ENCODE measurements at regions of chrX and their contacts with region 1.

Region 1: GRCh38 chrX:7286168-7286837 is 138.3 kb upstream of the PUDP start:
- DNase-seq: no peak

Region 2: GRCh38 chrX:7242613-7243012 is 43.7 kb before region 1 on chrX:
- intact Hi-C with region 1: loop called in 1 of 2 experiments (anchors 1 kb)
- DNase-seq: no peak

Measured in posterior vena cava (tissue), 2 donors.